ENCODE measurements at regions of chr1 and their contacts with region 1.

Region 1: GRCh38 chr1:201877877-201878401 is 10.8 kb upstream of the SHISA4 start:
- DNase-seq: peak in 1 of 2 donors; percentile 77
- H3K4me3 ChIP-seq: no peak overlapping the region
- H3K27ac ChIP-seq: no peak overlapping the region
- H3K4me1 ChIP-seq: peaks cover 14% of the 10 kb centered on the region
- H3K27me3 ChIP-seq: no peaks in the 10 kb centered on the region
- CTCF ChIP-seq: peak; percentile 37 to 42 (median 39)
- POLR2A ChIP-seq: no peak

Region 2: GRCh38 chr1:201013991-201014815 is 863.7 kb before region 1 on chr1:
- intact Hi-C with region 1: no loop called
- DNase-seq: no peak
- H3K4me3 ChIP-seq: no peak overlapping the region
- H3K27ac ChIP-seq: no peak overlapping the region
- H3K4me1 ChIP-seq: peaks cover 32% of the 10 kb centered on the region
- H3K27me3 ChIP-seq: no peaks in the 10 kb centered on the region
- CTCF ChIP-seq: no peak
- POLR2A ChIP-seq: no peak

Region 3: DNA sequence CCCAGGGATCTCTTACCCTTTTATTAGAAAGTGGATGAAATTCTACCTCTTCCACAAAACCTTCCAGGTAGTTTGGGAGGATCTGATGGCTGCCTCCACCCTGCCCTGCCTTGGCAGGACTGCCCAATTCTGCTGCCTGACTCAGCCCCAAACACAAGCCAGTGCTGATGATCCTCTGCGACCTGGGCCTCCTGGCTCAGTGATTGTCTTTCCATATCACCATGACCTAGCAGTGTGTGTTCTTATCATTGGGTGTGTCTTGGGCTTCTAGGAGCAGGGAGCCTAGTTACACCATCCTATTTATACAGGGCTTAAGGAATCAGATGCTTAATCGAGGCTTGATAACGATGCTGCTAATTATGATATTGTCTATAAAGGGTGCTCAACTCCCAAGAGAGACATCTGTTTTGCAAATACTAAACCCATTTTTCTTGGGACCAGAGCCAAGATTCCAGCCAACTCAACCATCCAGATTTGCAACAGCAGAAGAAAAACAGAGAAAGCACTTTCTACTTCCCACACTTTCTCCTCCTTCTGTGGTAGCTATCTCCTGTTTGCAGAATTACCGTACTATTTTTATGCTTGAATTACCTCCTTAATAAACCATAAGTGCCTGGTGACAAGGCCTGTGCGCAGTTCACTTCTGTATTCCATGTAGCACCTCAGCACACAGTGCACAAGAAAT is 817.9 kb before region 1 on chr1:
- intact Hi-C with region 1: no loop called
- DNase-seq: no peak
- H3K4me3 ChIP-seq: no peak overlapping the region
- H3K27ac ChIP-seq: no peak overlapping the region
- H3K4me1 ChIP-seq: no peaks in the 10 kb centered on the region
- H3K27me3 ChIP-seq: no peaks in the 10 kb centered on the region
- CTCF ChIP-seq: no peak
- POLR2A ChIP-seq: no peak

Region 4: DNA sequence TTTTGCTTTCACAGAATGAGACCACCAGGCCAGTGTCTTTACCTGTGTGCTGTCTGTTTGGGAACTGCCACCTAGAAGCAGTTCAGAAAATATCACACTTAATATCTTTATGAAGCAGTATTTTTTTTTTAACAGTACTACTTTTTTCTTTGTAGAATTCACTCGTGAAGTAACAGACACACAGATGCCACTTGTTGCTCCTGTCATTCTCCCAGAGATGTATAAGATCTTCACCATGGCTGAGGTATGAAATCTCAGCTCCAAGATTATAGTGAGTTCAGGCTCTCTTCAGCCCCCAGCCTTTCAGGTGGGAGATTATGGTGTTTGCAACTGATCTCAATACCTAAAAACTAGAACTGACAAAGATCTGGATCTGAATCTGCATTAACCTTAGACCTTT is 26.0 kb before region 1 on chr1:
- intact Hi-C with region 1: loop called (anchors 1 kb)
- DNase-seq: no peak
- H3K4me3 ChIP-seq: no peak overlapping the region
- H3K27ac ChIP-seq: no peak overlapping the region
- H3K4me1 ChIP-seq: peaks cover 17% of the 10 kb centered on the region
- H3K27me3 ChIP-seq: no peaks in the 10 kb centered on the region
- CTCF ChIP-seq: no peak
- POLR2A ChIP-seq: no peak

Region 5: DNA sequence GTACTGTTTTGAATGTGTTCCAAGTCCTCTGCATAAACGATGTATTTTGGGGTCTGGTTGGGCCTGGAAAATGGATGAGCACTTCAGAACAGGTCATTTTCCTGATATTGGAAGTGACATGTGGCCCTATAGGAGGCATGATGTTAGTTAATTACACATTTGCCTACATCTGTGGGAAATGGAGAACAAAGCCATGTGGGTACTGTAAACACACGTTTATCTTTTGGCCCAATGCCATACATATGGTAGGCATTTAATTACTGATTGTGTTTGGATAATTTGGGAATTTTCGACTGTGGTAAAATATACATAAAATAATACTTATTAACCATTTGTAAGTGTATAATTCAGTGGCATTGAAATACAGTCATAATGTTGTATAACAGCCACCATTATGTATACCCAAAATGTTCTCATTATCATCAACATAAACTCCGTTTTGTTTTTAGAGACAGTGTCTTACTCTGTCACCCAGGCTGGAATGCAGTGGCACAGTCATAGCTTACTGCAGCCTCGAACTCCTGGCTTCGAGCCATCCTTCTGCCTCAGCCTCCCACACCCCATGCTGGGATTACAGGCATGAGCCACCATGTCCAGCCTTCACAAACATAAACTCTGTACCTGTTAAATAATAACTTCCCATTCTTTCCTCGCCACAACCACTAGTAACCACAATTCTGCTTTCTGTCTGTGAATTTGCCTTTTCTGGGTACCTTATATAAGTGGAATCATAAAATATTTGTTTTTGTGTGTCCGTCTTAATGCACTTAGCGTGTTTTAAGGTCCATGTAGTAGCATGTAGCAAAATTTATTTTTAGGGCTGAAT is 92.6 kb after region 1 on chr1:
- intact Hi-C with region 1: loop called (anchors 5 kb)
- DNase-seq: no peak
- H3K4me3 ChIP-seq: no peak overlapping the region
- H3K27ac ChIP-seq: no peak overlapping the region
- H3K4me1 ChIP-seq: no peaks in the 10 kb centered on the region
- H3K27me3 ChIP-seq: no peaks in the 10 kb centered on the region
- CTCF ChIP-seq: no peak
- POLR2A ChIP-seq: no peak